Sigmoid colon (tissue), 7 donors: ENCODE measurements at regions of chr5 and their contacts with region 1.

Region 1: GRCh38 chr5:36397901-36398536 is 96.3 kb upstream of the RANBP3L start:
- DNase-seq: no peak
- H3K4me3 ChIP-seq: no peak overlapping the region
- H3K27ac ChIP-seq: no peak overlapping the region
- H3K4me1 ChIP-seq: peaks cover 0 to 26% (median 23%) of the 10 kb centered on the region in 4 donors
- H3K27me3 ChIP-seq: no peaks in the 10 kb centered on the region
- CTCF ChIP-seq: peak; percentile 25 to 58 (median 36)
- EP300 ChIP-seq: no peak
- POLR2A ChIP-seq: no peak

Region 2: DNA sequence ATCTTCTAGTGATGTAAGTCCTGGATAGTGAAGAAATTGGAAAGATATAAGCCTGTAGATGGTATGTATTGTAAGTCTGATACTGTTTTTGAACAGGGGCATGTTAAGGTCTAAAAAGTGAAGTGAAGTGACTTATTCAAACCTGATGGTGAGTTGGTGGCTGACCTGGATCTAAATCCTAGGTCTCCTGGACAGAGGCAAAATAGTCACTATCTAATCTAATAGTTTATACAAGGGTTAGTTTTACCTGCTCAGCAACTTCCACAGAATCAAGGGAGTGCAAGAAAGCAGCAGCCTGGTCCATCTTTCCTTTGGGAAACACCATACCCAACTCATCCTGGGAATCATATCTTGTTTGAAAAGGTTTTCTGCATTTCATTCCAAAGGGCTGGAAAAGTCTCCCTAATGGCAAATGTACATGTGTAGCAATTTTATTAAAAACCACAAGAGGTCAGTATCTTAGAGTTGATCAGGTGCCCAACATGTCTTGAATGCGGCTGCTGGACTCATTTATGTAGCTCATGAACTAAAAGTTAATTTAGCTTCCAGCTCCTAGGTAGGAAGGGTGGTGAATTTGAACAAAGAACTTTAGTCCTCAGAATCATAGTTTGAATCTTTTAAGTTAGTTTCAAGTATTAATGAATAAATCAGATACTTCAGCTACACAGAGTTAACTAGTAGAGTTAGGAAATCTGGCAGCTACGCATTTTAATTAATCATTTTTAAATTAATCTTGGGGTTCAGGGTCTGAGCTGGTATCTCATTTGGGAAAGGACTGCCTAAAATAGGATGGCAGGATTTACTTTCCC is 220.1 kb before region 1 on chr5:
- intact Hi-C with region 1: loop called (anchors 10 kb)
- DNase-seq: no peak
- H3K4me3 ChIP-seq: no peak overlapping the region
- H3K27ac ChIP-seq: no peak overlapping the region
- H3K4me1 ChIP-seq: no peaks in the 10 kb centered on the region
- H3K27me3 ChIP-seq: no peaks in the 10 kb centered on the region
- CTCF ChIP-seq: peak; percentile 11 to 59 (median 37)
- EP300 ChIP-seq: no peak
- POLR2A ChIP-seq: no peak

Region 3: GRCh38 chr5:36264202-36264760 is 133.7 kb before region 1 on chr5:
- intact Hi-C with region 1: loop called (anchors 2 kb)
- DNase-seq: no peak
- H3K4me3 ChIP-seq: no peak overlapping the region
- H3K27ac ChIP-seq: no peak overlapping the region
- H3K4me1 ChIP-seq: no peaks in the 10 kb centered on the region
- H3K27me3 ChIP-seq: no peaks in the 10 kb centered on the region
- CTCF ChIP-seq: no peak
- EP300 ChIP-seq: no peak
- POLR2A ChIP-seq: no peak

Region 4: DNA sequence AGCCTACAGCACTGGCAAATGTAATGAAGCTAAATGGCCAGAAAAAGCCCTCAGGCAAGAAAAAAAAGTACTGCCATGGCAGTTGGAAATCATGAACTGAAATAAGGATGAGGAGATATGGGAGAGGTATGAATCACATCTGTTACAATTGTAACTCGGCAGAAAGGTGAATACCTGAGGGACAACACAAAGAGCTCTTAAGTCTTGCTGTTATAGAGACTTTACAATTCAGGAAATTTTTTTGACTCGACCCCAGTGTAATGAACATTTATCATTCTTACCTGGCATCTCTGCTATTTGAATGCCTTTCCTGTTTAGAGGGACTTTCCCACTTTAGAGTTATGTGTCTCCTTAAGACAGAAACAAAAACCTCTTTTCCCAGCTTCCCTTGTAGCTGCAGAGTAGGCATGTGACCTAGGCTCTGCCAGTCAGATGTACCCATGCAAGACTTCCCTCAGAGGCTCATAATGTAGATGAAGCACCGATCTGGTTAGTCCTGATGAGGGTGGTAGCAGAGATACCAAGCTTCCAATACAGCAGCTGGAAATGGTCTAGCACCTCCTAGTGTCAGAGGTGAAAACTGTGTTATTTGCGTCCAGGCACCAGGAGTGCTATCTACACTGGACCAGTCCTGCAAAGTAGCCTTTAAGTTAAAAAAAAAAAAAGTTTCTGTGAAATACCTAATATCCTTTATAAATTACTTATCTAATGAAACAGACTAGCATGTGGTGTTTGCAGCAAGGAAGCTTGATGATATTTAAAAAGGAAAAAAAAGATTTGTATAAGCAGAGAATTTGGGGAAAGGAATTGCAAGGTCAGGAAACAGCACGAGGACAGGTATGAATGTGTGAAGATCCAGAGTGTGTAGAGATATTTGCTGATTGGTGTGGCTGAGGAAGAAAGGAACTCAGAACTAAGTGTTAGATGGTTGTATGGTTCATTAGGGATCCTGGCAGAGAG is 61.4 kb after region 1 on chr5:
- intact Hi-C with region 1: no loop called
- DNase-seq: no peak
- H3K4me3 ChIP-seq: no peak overlapping the region
- H3K27ac ChIP-seq: no peak overlapping the region
- H3K4me1 ChIP-seq: no peaks in the 10 kb centered on the region
- H3K27me3 ChIP-seq: no peaks in the 10 kb centered on the region
- CTCF ChIP-seq: no peak
- EP300 ChIP-seq: no peak
- POLR2A ChIP-seq: no peak